Calu3 (cell line): ENCODE measurements at regions of chr18 and their contacts with region 1.

Region 1: GRCh38 chr18:54916507-54916906 is 42.8 kb downstream of the CCDC68 start:
- DNase-seq: no peak
- H3K4me3 Mint-ChIP-seq: no peak overlapping the region
- H3K27ac Mint-ChIP-seq: no peak overlapping the region
- H3K4me1 Mint-ChIP-seq: no peaks in the 10 kb centered on the region
- H3K27me3 Mint-ChIP-seq: no peaks in the 10 kb centered on the region
- CTCF ChIP-seq: no peak

Region 2: GRCh38 chr18:54983041-54983686 is 66.7 kb after region 1 on chr18:
- CTCF ChIA-PET with region 1: no interaction called
- intact Hi-C with region 1: loop called (anchors 10 kb)
- DNase-seq: peak; percentile 20
- H3K4me3 Mint-ChIP-seq: no peak overlapping the region
- H3K27ac Mint-ChIP-seq: no peak overlapping the region
- H3K4me1 Mint-ChIP-seq: peaks cover 6% of the 10 kb centered on the region
- H3K27me3 Mint-ChIP-seq: no peaks in the 10 kb centered on the region
- CTCF ChIP-seq: peak; percentile 70